ENCODE measurements at regions of chr10 and their contacts with region 1.

Region 1: DNA sequence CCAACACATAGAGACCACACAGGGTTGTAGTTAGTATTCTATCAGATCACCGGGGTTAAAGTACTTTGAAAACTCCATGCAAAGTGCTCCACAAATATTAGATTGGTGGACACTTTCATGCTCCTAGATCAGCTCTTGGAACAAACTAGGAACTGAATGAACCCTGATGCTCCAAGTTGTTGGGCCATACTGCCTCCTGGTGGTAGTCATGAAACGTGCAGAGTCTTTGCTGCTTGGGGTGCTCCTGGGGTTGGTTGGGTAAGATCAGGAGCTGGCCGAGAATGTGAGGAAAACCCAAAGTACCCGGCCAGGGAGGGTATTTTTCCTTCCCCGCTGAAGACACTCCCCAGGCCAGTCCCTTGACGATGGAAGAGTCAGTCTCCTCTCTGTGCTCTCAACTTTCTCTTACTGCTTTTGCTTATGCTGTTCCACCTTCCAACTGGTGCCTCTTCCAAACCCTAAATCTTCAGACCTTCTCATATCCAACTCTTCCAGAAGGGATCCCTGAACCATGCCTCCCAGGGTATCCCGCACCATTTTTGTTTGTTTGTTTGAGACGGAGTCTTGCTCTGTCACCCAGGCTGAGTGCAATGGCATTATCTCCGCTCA is 920 bp upstream of the RPEL1 start:
- DNase-seq: peak; percentile 76
- ATAC-seq: peak; percentile 87
- H3K4me3 ChIP-seq: 0 out of 6 replicates have a peak overlapping the region, but pooled peaks of 1 of the 3 experiments have one; percentile 27
- H3K27ac ChIP-seq: no peak overlapping the region
- H3K4me1 ChIP-seq: peaks cover 24% of the 10 kb centered on the region
- H3K27me3 ChIP-seq: no peaks in the 10 kb centered on the region
- CTCF ChIP-seq: peak; percentile 91
- EP300 ChIP-seq: no peak
- POLR2A ChIP-seq: no peak
- RAD21 ChIP-seq: peak; percentile 92

Region 2: GRCh38 chr10:102917962-102918816 is 326.6 kb before region 1 on chr10 and contains the start of gene CNNM2:
- CTCF ChIA-PET with region 1: interaction called, 4 read pairs
- POLR2A ChIA-PET with region 1: interaction called, 5 read pairs
- in situ Hi-C with region 1: loop called (anchors 10 kb)
- intact Hi-C with region 1: loop called (anchors 5 kb)
- DNase-seq: peak; percentile 99
- ATAC-seq: peak; percentile 85
- H3K4me3 ChIP-seq: peak within 1 kb of the TSS; percentile 97 to 99 (median 99)
- H3K27ac ChIP-seq: peak within 1 kb of the TSS; percentile 88
- H3K4me1 ChIP-seq: peaks cover 38% of the 10 kb centered on the region
- H3K27me3 ChIP-seq: no peaks in the 10 kb centered on the region; a peak in 1 of 5 replicates
- CTCF ChIP-seq: peak; percentile 34; the same call in 1 of the 2 replicates
- EP300 ChIP-seq: no peak
- POLR2A ChIP-seq: peak; percentile 62 to 70; a peak in 3 of 4 replicates
- RAD21 ChIP-seq: peak; percentile 41
- total RNA-seq, gene CNNM2: 3.4 and 9.0 TPM in 2 replicates

Region 3: GRCh38 chr10:103080891-103081581 is 163.7 kb before region 1 on chr10:
- CTCF ChIA-PET with region 1: no interaction called
- POLR2A ChIA-PET with region 1: no interaction called
- in situ Hi-C with region 1: loop called (anchors 10 kb)
- intact Hi-C with region 1: loop called (anchors 5 kb)
- DNase-seq: no peak
- ATAC-seq: no peak
- H3K4me3 ChIP-seq: no peak overlapping the region
- H3K27ac ChIP-seq: no peak overlapping the region
- H3K4me1 ChIP-seq: peaks cover 43% of the 10 kb centered on the region
- H3K27me3 ChIP-seq: no peaks in the 10 kb centered on the region
- CTCF ChIP-seq: no peak
- EP300 ChIP-seq: no peak
- POLR2A ChIP-seq: no peak
- RAD21 ChIP-seq: no peak

Region 4: GRCh38 chr10:103111031-103111917 is 133.5 kb before region 1 on chr10:
- CTCF ChIA-PET with region 1: no interaction called
- POLR2A ChIA-PET with region 1: interaction called, 3 read pairs
- in situ Hi-C with region 1: no loop called
- intact Hi-C with region 1: loop called (anchors 10 kb)
- DNase-seq: peak; percentile 15
- ATAC-seq: peak; percentile 65
- H3K4me3 ChIP-seq: no peak overlapping the region
- H3K27ac ChIP-seq: peak overlapping the region; percentile 6
- H3K4me1 ChIP-seq: peaks cover 37% of the 10 kb centered on the region
- H3K27me3 ChIP-seq: no peaks in the 10 kb centered on the region
- CTCF ChIP-seq: no peak
- EP300 ChIP-seq: no peak
- POLR2A ChIP-seq: no peak
- RAD21 ChIP-seq: no peak

Region 5: GRCh38 chr10:103125323-103126267 is 119.2 kb before region 1 on chr10:
- CTCF ChIA-PET with region 1: no interaction called
- POLR2A ChIA-PET with region 1: no interaction called
- in situ Hi-C with region 1: loop called (anchors 10 kb)
- intact Hi-C with region 1: no loop called
- DNase-seq: no peak
- ATAC-seq: no peak
- H3K4me3 ChIP-seq: no peak overlapping the region
- H3K27ac ChIP-seq: peak overlapping the region; percentile 17
- H3K4me1 ChIP-seq: peaks cover 63% of the 10 kb centered on the region
- H3K27me3 ChIP-seq: no peaks in the 10 kb centered on the region
- CTCF ChIP-seq: no peak
- EP300 ChIP-seq: no peak
- POLR2A ChIP-seq: no peak
- RAD21 ChIP-seq: no peak

Region 6: GRCh38 chr10:103192451-103193106 is 52.2 kb before region 1 on chr10:
- CTCF ChIA-PET with region 1: no interaction called
- POLR2A ChIA-PET with region 1: interaction called, 12 read pairs
- in situ Hi-C with region 1: loop called (anchors 5 kb)
- intact Hi-C with region 1: loop called (anchors 2 kb)
- DNase-seq: peak; percentile 72
- ATAC-seq: peak; percentile 79
- H3K4me3 ChIP-seq: peak overlapping the region; percentile 82 to 98 (median 85)
- H3K27ac ChIP-seq: peak overlapping the region; percentile 93
- H3K4me1 ChIP-seq: peaks cover 69% of the 10 kb centered on the region
- H3K27me3 ChIP-seq: no peaks in the 10 kb centered on the region; a peak in 1 of 5 replicates
- CTCF ChIP-seq: peak; percentile 15; the same call in 1 of the 2 replicates
- EP300 ChIP-seq: no peak
- POLR2A ChIP-seq: no peak; a peak in 1 of 4 replicates
- RAD21 ChIP-seq: no peak

Region 7: DNA sequence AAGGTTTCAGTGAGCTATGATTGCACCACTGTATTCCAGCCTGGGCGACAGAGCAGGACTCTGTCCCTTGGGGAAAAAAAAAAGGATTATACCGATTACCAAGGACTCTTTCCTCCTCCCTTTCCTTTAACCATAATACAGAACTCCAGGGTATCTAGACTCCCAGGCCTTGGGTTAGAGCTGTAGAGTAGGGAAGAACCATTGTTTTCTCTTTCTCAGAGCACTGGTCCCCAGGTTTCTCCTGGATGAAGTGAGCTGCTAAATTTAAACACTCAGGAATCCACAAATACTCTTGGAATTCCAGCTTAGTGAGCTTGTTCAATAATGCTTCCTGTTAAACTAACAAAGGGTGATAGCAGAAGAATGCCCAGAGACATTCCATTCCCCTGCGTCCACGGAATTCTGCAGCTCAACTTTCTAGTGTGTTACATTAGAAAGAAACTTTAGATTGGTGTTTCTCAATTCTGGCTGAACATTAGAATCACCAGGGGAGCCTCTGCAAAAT is 13.7 kb before region 1 on chr10:
- CTCF ChIA-PET with region 1: no interaction called
- POLR2A ChIA-PET with region 1: interaction called, 13 read pairs
- in situ Hi-C with region 1: no loop called
- intact Hi-C with region 1: no loop called
- DNase-seq: peak; percentile 95
- ATAC-seq: peak; percentile 91
- H3K4me3 ChIP-seq: peak overlapping the region in 1 of 3 experiments; percentile 23; a peak in 1 of 6 replicates
- H3K27ac ChIP-seq: peak overlapping the region; percentile 81
- H3K4me1 ChIP-seq: peaks cover 71% of the 10 kb centered on the region
- H3K27me3 ChIP-seq: no peaks in the 10 kb centered on the region
- CTCF ChIP-seq: no peak
- EP300 ChIP-seq: peak; percentile 29 to 90; a peak in 2 of 4 replicates
- POLR2A ChIP-seq: no peak
- RAD21 ChIP-seq: no peak

Measured in HepG2 (cell line).